A549 (cell line): ENCODE measurements at regions of chr5 and their contacts with region 1.

Region 1: GRCh38 chr5:39005566-39006232 is 68.5 kb downstream of the RICTOR start:
- DNase-seq: peak; percentile 6 to 68
- ATAC-seq: peak; percentile 90 to 94; a peak in 5 of 6 replicates
- H3K4me3 ChIP-seq: no peak overlapping the region
- H3K27ac ChIP-seq: no peak overlapping the region
- H3K4me1 ChIP-seq: no peaks in the 10 kb centered on the region
- CTCF ChIP-seq: peak; percentile 66
- EP300 ChIP-seq: no peak
- POLR2A ChIP-seq: no peak
- RAD21 ChIP-seq: peak; percentile 74 to 76

Region 2: DNA sequence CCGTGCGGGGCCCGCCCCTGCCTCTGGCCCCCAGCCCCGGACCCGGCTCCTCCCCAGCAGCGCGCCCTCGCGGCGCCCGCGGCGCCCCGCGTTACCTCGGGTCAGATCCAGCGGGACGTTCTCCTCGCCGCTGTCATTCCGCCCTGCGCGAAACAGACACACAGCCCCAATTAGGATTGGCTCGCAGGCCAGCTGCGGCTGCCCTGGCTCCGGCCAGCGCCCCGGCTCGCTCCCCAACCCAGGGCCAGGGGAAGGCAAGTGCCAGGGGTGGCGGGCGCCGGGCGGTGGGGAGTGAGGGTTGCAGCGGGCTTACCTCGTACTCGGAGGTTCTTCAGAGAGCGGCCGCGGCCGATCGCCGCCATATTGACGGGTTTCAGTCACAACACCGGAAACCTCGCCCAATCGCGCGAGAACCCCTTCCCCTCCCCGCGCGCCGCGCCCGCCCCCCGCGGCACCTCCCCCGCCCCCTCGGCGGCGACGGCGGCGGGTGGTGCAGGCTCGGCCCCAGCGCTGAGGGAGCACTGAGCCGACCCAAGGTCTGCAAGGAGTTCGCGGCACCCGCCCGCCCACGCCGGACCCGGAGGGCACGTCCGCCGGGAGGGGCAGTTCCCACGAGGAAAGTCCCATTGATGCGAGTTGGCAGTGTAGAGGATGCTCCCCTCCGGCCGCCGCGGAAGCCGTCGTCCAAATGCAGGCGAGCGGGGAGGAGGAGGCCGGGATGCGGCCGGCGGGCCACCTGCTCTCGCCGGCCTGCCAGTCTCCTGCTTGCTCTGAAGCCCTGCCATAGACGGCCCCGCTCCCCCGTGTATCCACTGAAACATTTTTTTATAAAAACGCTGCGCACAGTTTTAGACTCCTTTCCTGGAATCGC is 68.6 kb after region 1 on chr5 and contains the start of gene RICTOR:
- CTCF ChIA-PET with region 1: interaction called, 33 read pairs
- POLR2A ChIA-PET with region 1: no interaction called
- DNase-seq: peak; percentile 79 to 94
- ATAC-seq: peak; percentile 83 to 90
- H3K4me3 ChIP-seq: peak within 1 kb of the TSS; percentile 90
- H3K27ac ChIP-seq: peak within 1 kb of the TSS; percentile 89 to 98
- H3K4me1 ChIP-seq: peaks cover 51% of the 10 kb centered on the region
- CTCF ChIP-seq: no peak
- EP300 ChIP-seq: peak in 1 of 2 experiments; percentile 16; a peak in 1 of 5 replicates
- POLR2A ChIP-seq: peak; percentile 87
- RAD21 ChIP-seq: peak; percentile 11 to 26; a peak in 2 of 5 replicates
- polyA plus RNA-seq, gene RICTOR: 26.8 and 28.5 TPM in 2 replicates

Region 3: DNA sequence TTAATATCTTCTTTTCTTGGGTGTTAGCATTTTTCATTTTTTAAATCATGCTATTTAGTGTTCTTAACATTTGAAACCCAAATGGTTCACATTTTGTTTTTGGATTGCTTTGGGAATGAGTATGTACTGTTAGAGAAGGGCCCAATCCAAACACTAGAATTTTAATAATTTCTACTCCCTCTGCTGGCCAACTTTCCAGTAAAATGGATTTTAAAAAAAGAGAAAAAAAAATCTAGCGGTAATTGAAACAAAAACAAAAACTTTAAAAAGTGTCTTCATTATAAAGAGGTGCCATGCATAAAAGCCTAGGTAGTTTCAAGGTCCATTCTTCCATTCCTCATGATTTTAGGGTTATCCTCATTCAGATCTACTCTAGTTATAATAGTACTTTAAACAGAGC is 100.6 kb after region 1 on chr5:
- CTCF ChIA-PET with region 1: interaction called, 11 read pairs
- POLR2A ChIA-PET with region 1: no interaction called
- DNase-seq: peak in 1 of 2 experiments; percentile 43
- ATAC-seq: no peak
- H3K4me3 ChIP-seq: no peak overlapping the region
- H3K27ac ChIP-seq: peak overlapping the region in 1 of 2 experiments; percentile 63; a peak in 4 of 6 replicates
- H3K4me1 ChIP-seq: peaks cover 62% of the 10 kb centered on the region
- CTCF ChIP-seq: peak; percentile 69
- EP300 ChIP-seq: no peak
- POLR2A ChIP-seq: no peak
- RAD21 ChIP-seq: peak; percentile 56 to 71

Region 4: GRCh38 chr5:39452846-39453245 is 447.1 kb after region 1 on chr5:
- CTCF ChIA-PET with region 1: no interaction called
- POLR2A ChIA-PET with region 1: no interaction called
- DNase-seq: no peak
- ATAC-seq: no peak
- H3K4me3 ChIP-seq: no peak overlapping the region
- H3K27ac ChIP-seq: peak overlapping the region in 1 of 2 experiments; percentile 62; a peak in 2 of 6 replicates
- H3K4me1 ChIP-seq: peaks cover 32% of the 10 kb centered on the region
- CTCF ChIP-seq: no peak
- EP300 ChIP-seq: no peak
- POLR2A ChIP-seq: no peak
- RAD21 ChIP-seq: no peak